ENCODE measurements at regions of chr12 and their contacts with region 1.

Region 1: DNA sequence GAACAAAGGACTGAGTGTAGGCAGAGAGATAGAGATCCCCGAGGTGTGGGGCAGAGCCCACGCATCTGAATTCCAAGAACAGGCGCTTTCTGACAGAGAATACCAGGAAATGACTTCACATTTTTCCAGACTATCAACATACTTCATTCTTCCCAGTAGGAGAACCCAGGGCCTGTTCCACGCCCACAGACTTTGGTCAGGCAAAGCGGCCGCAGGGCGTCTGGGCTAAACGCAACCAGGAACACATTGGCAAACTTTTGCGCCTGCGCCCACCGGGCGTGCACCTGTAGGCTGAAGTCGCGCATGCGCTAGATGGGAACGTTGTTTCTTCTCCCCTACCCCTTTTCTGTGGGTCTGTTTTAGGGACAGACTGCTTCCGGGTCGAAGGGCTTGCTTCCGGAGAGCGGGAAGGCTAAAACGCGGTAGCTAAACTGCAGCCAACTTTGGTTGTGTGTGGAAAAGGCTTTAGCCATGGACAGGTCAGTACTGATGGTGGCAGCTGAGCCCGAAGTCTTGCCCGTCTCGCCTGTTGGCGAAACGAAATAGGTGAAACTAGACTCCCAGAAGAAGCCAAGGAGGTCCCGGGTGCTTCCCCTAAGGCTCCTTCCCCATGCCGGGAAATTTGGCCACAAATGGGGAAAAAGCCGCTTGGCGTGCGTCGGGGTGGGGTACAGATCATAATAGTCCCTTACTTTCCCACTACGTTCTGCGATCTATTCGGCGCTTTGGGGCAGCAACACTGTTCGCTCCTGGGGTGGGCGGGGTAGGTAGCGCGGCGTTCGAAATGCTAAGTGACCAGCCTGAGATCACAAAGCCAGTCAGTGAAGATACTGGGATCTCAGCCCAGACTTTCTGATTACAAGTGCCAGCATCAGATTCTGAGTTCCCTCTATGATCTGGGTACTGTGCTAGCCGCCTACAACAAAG is at the start of gene NUP107:
- DNase-seq: peak; percentile 100
- total RNA-seq, gene NUP107: 31.2 to 33.8 TPM

Region 2: DNA sequence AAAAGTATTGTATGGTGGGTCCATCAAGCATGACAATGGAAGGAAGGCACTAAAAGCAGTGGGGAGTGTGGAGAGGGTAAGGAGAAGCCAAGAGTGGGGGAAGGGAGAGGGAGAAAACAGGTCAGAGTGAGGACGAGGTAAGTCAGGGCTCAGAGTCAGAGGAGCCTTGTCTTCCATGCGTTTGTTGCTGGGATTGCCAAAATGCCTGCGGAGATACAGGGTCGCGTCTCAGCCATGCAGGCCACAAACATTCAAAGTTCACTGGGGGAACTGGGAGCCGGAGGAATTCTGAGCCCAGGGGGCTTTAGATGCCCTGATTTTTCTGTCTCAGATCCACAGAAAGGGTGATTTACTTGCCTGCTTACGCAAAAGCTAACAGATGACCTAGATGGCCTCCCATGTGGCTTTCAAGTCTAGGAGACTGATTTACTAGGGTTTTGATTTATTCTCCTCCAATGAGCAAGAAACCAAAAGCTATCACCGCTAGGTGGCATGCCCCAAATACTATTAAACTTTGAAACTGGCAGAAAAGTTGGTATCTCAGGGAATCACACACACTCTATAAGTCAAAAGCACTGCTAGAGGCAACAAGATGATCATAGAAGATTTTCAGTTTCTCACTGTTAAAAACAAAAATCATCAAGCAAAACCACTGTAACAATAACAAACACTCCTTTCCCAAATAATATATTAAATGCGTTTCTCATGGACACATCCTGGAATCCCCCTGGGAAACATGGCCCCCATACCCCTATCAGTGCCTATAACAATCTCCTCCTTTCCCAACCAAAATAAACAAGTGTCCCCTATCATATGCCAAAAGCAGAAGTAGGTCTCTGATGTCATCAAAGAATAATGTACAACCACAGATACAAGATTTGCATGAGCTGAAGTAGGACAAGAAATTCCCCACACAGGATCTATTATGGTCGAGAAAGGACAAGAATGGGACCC is 328.0 kb before region 1 on chr12:
- intact Hi-C with region 1: loop called in 1 of 2 experiments (anchors 5 kb)
- DNase-seq: no peak

Region 3: DNA sequence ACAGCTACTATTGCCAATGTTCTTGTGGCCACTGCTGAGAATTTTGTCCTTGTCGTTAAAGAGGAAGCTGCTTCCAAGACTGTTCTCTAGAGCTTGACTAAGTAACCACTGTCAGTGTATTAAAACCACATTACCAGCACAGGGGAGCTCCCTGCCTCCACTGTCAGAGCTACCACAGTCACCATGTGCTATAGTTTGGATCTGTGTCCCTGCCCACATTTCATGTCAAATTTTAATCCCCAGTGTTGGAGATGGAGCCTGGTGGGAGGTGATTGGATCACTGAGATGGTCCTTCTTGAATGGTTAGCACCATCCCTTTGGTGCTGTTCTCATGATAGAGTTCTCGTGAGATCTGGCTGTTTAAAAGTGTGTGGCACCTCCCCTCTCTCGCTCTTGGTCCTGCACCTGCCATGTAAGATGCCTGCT is 99.4 kb before region 1 on chr12:
- intact Hi-C with region 1: no loop called
- DNase-seq: no peak

Region 4: DNA sequence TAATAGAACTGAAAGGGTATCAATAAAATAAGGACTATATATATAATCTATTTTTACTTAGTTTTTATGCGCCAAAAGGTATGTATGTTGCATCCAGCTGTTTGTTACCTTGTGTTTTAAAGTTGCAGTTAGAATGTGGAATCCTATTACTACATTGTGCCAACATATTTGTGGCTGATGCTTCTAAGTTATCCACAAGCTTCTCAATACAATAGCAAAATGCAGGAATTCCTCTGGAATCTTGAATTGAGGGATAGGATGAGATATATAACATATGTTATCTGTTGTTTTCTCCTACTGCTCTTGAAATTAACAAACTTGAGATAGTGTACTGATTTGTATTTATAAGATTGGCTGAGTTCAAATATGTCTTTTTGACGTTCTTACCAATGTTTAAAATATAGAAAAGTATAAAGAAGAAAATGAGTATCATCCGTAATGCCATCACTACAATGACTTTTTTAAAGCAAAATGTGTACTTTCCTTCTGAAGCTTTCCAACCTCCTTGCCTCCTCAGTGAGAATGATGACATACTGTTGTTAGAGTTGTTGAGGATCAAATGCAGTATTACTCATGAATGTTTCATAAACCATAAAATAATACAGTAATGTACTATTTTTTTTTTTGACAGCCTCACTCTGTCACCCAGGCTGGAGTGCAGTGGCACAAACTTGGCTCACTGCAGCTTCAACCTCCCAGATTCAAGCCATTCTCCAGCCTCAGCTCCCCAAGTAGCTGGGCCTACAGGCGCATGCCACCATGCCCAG is 69.5 kb before region 1 on chr12:
- intact Hi-C with region 1: loop called in 1 of 2 experiments (anchors 2 kb)
- DNase-seq: no peak

Measured in posterior vena cava (tissue), 2 donors.